HEK293 (cell line): ENCODE measurements at regions of chr19 and their contacts with region 1.

Region 1: GRCh38 chr19:49954079-49954829 is 6.7 kb downstream of the SIGLEC11 start:
- H3K4me3 ChIP-seq: no peak overlapping the region
- H3K27ac ChIP-seq: no peak overlapping the region
- H3K4me1 ChIP-seq: 0 out of 2 replicates have a peak, but pooled peaks cover 4% of the 10 kb centered on the region
- CTCF ChIP-seq: no peak

Region 2: DNA sequence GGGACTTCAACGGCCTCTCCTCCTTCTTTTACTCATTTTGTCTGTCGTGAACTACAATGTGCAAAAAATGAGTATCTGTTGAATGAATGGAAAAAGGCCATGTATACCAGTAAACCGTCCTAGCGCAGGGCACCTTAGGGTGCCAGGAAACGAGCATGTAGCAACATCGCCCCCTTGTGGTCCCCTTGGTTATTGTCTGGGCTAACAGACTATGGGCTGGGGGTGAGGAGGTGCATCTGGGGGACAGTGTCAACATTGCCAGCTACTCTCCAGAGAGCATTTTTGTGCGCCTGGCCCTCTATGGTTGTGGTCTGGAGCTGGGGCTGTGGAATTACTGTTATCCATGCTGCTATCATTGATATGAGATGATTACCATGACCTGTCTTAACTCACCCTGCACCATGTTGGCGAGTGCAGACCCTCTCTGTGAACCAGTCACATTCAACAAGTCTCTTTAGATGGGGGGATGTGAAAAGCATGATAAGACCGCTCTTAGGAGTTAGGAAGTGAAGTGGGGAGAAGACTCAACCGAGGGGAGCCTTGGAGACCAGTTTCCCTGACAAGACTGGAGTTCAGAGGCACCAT is 29.5 kb after region 1 on chr19:
- CTCF ChIA-PET with region 1: interaction called, 17 read pairs
- POLR2A ChIA-PET with region 1: no interaction called
- H3K4me3 ChIP-seq: no peak overlapping the region
- H3K27ac ChIP-seq: no peak overlapping the region
- H3K4me1 ChIP-seq: no peaks in the 10 kb centered on the region
- CTCF ChIP-seq: peak; percentile 77